Panc1 (cell line): ENCODE measurements at regions of chr17 and their contacts with region 1.

Region 1: GRCh38 chr17:64661976-64662773 is at the start of gene SMURF2:
- DNase-seq: no peak
- ATAC-seq: peak; percentile 84
- H3K4me3 ChIP-seq: peak within 1 kb of the TSS; percentile 60 to 64
- H3K27ac ChIP-seq: peak within 1 kb of the TSS; percentile 83
- H3K4me1 ChIP-seq: peaks cover 24% of the 10 kb centered on the region; the same call in 1 of the 2 replicates
- H3K27me3 ChIP-seq: no peaks in the 10 kb centered on the region
- CTCF ChIP-seq: no peak
- total RNA-seq, gene SMURF2: 21.3 TPM

Region 2: DNA sequence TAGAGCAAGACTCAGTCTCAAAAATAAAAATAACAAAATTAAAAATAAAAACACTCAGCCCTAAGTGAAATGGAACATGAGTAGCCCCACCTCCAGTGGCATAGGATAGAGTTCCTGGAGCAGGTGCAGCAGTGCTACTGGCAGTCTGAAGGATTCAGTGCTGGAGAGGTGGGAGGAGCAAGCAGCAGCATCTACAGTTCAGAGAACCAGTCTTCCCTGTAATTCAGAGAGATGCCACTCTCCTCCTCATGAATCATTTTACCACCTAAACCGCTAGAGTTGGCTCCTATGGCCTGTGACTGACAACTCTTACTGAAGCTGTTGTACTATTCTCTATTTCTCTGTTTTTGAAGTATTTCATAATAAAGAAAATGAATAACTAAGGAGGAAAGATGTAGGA is 55.9 kb after region 1 on chr17:
- CTCF ChIA-PET with region 1: no interaction called
- POLR2A ChIA-PET with region 1: no interaction called
- in situ Hi-C with region 1: no loop called
- intact Hi-C with region 1: loop called (anchors 10 kb)
- DNase-seq: no peak
- ATAC-seq: no peak
- H3K4me3 ChIP-seq: no peak overlapping the region
- H3K27ac ChIP-seq: no peak overlapping the region
- H3K4me1 ChIP-seq: peaks cover under 1% of the 10 kb centered on the region
- H3K27me3 ChIP-seq: no peaks in the 10 kb centered on the region
- CTCF ChIP-seq: no peak